Psoas muscle (tissue), 8 donors: ENCODE measurements at regions of chr4 and their contacts with region 1.

Region 1: DNA sequence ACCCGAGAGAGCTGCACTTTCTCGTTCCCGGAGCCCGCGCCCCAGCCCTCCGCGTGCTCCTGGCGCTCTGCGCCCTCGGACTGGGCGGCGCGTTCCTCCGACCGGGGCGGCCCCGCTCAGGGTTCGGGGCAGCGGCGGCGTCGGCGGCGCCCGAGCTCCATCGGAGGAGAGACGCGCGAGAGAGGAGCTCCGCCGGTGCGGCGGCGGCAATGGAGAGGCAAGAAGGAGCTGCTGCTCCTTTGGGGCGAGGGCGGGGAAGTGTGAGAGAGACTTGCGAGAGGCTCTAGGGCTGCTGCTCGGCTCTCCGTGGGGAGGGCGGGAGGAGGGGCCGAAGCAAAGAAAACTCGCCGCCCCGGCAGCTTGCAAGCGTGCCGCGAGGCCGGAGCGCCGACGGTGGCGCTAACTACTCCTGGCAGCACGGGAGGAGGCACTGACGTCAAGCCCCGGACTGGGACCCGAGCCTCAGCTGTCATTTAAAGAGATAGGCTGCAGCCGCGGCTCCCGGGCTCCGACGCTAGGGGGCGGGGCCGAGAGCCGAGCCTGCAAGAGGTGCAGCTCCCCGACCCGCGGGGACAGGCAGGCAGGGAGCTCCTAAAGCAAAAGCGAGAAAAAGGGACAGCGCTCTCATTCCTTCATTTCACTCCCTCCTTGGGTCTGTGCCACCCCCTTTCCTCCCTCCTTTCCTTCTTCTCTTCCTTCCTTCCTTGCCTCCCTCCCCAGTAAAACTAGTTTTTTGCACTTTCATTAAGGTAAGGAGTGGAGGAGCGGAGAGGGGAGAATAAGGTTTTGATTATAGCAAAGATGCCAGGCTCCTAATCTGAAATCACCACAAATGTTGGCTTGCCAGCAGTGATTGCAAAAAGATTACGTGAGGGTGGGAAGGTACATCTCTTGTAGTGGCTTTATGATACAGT is at the start of gene KCTD8:
- DNase-seq: peak; percentile 89 to 95
- ATAC-seq: peak; percentile 90 to 93 (median 92)
- H3K4me3 ChIP-seq: peak within 1 kb of the TSS; percentile 81
- H3K27ac ChIP-seq: peak within 1 kb of the TSS; percentile 90
- H3K4me1 ChIP-seq: no peaks in the 10 kb centered on the region
- H3K27me3 ChIP-seq: peaks cover 0 to 10% (median 0%) of the 10 kb centered on the region in 3 donors
- CTCF ChIP-seq: peak; percentile 72
- total RNA-seq, gene KCTD8: 0.56 to 2.3 (median 1.3) TPM

Region 2: GRCh38 chr4:44493924-44494323 is 45.1 kb after region 1 on chr4:
- intact Hi-C with region 1: loop called in 1 of 2 experiments (anchors 5 kb)
- DNase-seq: no peak
- ATAC-seq: peak in 2 of 4 donors; percentile 62 to 76
- H3K4me3 ChIP-seq: no peak overlapping the region
- H3K27ac ChIP-seq: no peak overlapping the region
- H3K4me1 ChIP-seq: no peaks in the 10 kb centered on the region
- H3K27me3 ChIP-seq: no peaks in the 10 kb centered on the region
- CTCF ChIP-seq: peak; percentile 41

Region 3: DNA sequence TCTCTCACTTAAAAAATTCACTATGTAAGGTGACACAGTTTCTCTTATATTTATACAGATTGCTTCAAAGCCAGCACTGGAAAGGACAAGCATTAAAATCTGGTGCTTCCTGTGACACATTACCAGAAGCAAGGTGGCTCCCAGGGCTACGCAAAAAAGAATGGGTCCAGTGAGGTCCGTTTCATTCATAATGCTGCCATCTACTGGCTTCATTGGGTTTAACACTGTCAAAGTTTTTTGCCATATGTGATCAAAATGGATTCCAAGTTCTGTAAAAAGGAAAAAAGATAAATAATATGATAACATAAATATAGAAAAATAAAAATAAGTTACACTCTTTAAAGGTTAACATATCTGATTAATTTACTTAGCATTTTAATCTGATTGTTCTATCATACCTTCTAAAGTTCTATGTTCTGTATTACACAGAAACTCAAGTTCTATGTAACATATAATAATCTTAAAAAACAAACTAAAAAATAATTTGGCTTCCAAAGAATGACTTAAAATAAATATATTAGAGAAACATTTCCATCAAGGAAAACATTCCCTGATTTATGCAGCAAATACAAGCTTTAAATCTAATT is 180.6 kb after region 1 on chr4:
- intact Hi-C with region 1: loop called in 1 of 2 experiments (anchors 5 kb)
- DNase-seq: no peak
- ATAC-seq: peak; percentile 68 to 91 (median 84)
- H3K4me3 ChIP-seq: no peak overlapping the region
- H3K27ac ChIP-seq: no peak overlapping the region
- H3K4me1 ChIP-seq: no peaks in the 10 kb centered on the region
- H3K27me3 ChIP-seq: no peaks in the 10 kb centered on the region
- CTCF ChIP-seq: peak; percentile 72